ENCODE measurements at regions of chr19 and their contacts with region 1.

Region 1: GRCh38 chr19:1767464-1767933 is 14.2 kb downstream of the ONECUT3 start:
- DNase-seq: peak in 3 of 5 donors; percentile 43 to 69 (median 65)
- H3K4me3 ChIP-seq: no peak overlapping the region
- H3K27ac ChIP-seq: no peak overlapping the region
- H3K4me1 ChIP-seq: no peaks in the 10 kb centered on the region
- H3K27me3 ChIP-seq: peaks cover 2% of the 10 kb centered on the region
- CTCF ChIP-seq: peak; percentile 69 to 81 (median 76)
- EP300 ChIP-seq: no peak
- POLR2A ChIP-seq: no peak

Region 2: DNA sequence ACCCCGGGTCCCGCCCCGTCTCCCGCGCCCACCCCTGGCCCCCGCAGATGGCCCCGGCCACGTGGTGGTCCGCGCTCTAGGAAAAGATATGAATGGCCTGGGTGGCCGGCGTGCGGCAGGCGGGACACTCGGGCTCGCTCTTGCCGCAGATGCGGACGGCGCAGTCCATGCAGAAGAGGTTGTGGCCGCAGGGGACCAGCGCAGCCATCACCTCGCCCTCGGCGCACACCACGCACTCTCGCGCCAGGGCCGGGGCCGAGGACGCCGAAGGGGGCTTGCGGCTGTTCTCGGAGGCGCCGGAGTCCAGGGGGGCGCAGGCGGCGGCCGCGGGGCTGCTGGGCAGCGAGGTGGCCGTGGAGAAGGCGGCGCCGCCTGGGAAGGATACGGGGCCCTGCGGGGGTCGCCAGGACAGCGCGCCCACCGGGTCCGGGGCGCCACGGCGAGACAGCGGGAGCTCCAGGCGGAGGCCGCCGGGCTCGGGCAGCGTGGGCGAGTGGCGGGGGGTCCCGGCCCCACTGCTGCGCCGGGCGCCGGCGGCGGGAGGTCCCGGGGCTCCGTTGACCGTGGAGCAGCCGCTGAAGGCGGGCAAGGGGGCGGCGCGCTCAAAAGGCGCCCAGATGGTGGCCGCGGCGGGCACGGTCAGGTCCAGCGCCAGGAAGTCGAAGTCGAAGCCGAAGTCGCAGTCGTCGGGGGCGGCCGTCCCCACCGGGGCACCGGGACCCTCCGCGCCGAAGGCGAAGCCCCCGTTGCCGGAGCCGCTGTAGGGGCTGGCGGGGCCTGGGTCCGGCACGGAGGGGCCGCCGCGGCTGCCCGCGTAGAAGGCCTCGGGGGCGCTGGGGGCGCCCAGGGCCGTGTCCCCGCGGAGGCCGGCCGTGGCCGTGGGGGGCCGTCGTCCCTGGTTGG is 211.8 kb before region 1 on chr19:
- intact Hi-C with region 1: loop called in 2 of 4 experiments (anchors 10 kb)
- DNase-seq: no peak
- H3K4me3 ChIP-seq: no peak overlapping the region
- H3K27ac ChIP-seq: no peak overlapping the region
- H3K4me1 ChIP-seq: no peaks in the 10 kb centered on the region
- H3K27me3 ChIP-seq: no peaks in the 10 kb centered on the region
- CTCF ChIP-seq: no peak
- EP300 ChIP-seq: no peak
- POLR2A ChIP-seq: no peak